ENCODE measurements at regions of chr12 and their contacts with region 1.

Region 1: GRCh38 chr12:69585189-69586062 is at the start of gene CCT2:
- DNase-seq: peak; percentile 98
- H3K4me3 ChIP-seq: peak within 1 kb of the TSS; percentile 86 to 94 (median 92)
- H3K27ac ChIP-seq: peak within 1 kb of the TSS; percentile 23 to 85 (median 70)
- H3K4me1 ChIP-seq: peaks cover 6 to 7% of the 10 kb centered on the region in 2 donors
- H3K27me3 ChIP-seq: no peaks in the 10 kb centered on the region
- CTCF ChIP-seq: peak in 3 of 6 experiments; percentile 17 to 28 (median 19)
- POLR2A ChIP-seq: peak in 1 of 2 donors; percentile 84
- total RNA-seq, gene CCT2: 90.9 to 174 (median 117) TPM

Region 2: GRCh38 chr12:69359531-69360347 is 225.7 kb before region 1 on chr12 and contains the start of gene YEATS4:
- intact Hi-C with region 1: loop called (anchors 10 kb)
- DNase-seq: peak; percentile 84 to 86
- H3K4me3 ChIP-seq: peak within 1 kb of the TSS; percentile 42 to 97 (median 83)
- H3K27ac ChIP-seq: peak within 1 kb of the TSS; percentile 95 to 99 (median 98)
- H3K4me1 ChIP-seq: peaks cover 0 to 4% of the 10 kb centered on the region in 2 donors
- H3K27me3 ChIP-seq: no peaks in the 10 kb centered on the region
- CTCF ChIP-seq: no peak
- POLR2A ChIP-seq: peak in 1 of 2 donors; percentile 67
- total RNA-seq, gene YEATS4: 13.8 to 37.8 (median 20.9) TPM

Region 3: DNA sequence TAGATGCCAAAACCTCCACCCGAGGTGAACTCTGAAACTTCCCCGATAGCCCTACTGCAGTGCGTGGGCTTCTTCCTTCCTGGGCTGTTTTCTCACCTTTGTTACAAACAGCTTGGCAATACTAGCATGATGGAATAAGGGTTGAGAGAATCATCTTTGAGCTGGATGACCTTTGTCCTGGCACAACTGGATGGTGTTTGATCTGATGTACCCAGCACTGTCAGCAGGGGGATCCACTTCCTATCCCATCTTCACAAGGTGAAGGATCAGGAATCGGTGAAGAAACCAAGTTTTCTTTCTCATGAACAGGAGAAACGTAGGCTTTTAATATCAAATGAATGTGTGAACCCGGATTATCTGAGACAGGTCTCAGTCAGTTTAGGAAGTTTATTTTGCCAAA is 44.8 kb after region 1 on chr12:
- intact Hi-C with region 1: no loop called
- DNase-seq: no peak
- H3K4me3 ChIP-seq: no peak overlapping the region
- H3K27ac ChIP-seq: no peak overlapping the region
- H3K4me1 ChIP-seq: no peaks in the 10 kb centered on the region
- H3K27me3 ChIP-seq: no peaks in the 10 kb centered on the region
- CTCF ChIP-seq: no peak
- POLR2A ChIP-seq: no peak

Region 4: DNA sequence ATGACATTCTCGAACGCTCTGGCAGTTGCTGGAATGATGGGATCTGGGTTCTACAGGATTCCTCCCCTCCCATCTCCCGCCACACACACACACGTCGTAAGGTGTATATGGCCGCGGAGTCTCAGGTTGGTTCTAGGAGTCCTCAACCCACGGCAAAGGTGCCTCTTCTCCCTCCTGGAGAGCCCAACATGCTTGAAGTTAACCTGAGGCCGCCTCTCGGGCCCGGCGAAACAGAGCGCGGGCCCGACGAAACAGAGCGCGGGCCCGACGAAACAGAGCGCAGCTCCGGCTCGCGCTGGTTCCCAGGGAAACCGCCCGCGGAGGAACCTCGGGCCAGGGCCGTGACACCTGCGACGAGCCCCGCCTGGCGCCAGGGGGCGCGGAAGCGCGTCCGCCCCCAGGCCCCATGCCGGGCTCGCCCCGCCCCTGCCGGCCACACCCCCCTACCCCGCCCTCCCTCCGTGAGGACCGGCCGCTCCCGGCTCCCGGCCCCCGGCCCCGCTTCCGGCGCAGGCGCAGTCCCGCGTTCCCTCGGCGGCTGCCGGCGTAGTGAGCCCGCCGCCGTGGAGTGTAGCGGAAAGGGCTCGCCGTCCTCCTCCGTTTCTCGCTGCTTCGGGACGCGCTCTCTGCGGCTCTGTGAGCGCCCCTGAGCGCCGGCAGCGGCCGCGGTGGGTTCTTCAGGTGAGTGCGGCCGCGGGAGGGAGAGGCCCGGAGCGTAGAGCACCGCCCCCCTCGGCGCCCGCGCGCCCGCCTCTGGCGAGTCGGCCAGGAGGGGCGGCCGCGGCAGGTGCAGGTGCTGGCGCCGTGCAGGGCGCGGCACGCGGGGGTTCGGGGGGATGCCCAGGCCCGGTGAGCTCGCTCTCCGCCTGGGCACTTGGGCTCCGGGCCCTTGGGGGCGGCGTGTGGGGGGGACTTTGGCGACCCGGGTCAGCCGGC is 153.2 kb after region 1 on chr12 and contains the start of gene RAB3IP:
- intact Hi-C with region 1: loop called (anchors 10 kb)
- DNase-seq: peak; percentile 88 to 92
- H3K4me3 ChIP-seq: peak within 1 kb of the TSS; percentile 54 to 96 (median 88)
- H3K27ac ChIP-seq: peak within 1 kb of the TSS; percentile 81 to 89 (median 87)
- H3K4me1 ChIP-seq: peaks cover 8 to 11% of the 10 kb centered on the region in 2 donors
- H3K27me3 ChIP-seq: no peaks in the 10 kb centered on the region
- CTCF ChIP-seq: peak in 5 of 6 experiments; percentile 18 to 71 (median 51)
- POLR2A ChIP-seq: peak in 1 of 2 donors; percentile 77
- total RNA-seq, gene RAB3IP: 25.2 to 74.7 (median 34.7) TPM

Measured in thyroid gland (tissue), 4 donors.